Activated B cell treated with CpG ODN at 0.5 μM for 24 hours (primary cell): ENCODE measurements at regions of chr11 and their contacts with region 1.

Region 1: DNA sequence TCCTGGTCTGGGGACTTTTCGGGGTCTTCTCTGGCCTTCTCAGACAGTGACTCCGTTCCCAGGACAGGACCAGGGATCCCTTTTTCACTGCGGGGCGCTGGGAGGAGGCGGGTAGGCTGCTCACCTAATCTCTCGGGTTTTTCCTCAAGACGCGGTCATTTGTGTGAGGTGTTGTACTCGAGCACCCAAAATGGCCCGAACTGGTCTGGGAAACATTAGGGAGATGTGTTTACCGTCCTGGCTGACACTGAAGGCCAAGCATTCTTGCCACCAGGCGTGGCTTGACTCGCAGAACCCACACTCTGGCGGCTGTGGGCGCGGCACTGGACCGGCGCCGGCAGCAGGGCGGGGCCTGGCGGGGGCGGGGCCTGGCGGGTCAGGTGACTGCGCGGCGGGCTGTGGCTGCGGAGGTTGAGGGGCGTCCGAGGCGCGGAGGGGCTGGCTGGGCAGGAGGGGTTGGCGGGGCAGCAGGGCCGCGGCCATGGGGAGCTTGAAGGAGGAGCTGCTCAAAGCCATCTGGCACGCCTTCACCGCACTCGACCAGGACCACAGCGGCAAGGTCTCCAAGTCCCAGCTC is at the start of gene SWAP70:
- DNase-seq: peak; percentile 97
- ATAC-seq: peak; percentile 83
- H3K4me3 Mint-ChIP-seq: peak within 1 kb of the TSS; percentile 96
- H3K27ac Mint-ChIP-seq: peak within 1 kb of the TSS; percentile 97
- H3K4me1 Mint-ChIP-seq: peaks cover 73% of the 10 kb centered on the region
- H3K27me3 Mint-ChIP-seq: no peaks in the 10 kb centered on the region
- CTCF ChIP-seq: no peak
- total RNA-seq, gene SWAP70: 277 and 288 TPM in 2 replicates

Region 2: GRCh38 chr11:9601037-9601875 is 62.5 kb before region 1 on chr11:
- CTCF ChIA-PET with region 1: no interaction called
- POLR2A ChIA-PET with region 1: interaction called, 19 read pairs
- intact Hi-C with region 1: no loop called
- DNase-seq: peak; percentile 53
- ATAC-seq: peak; percentile 76
- H3K4me3 Mint-ChIP-seq: peak overlapping the region; percentile 85
- H3K27ac Mint-ChIP-seq: peak overlapping the region; percentile 96
- H3K4me1 Mint-ChIP-seq: peaks cover 59% of the 10 kb centered on the region
- H3K27me3 Mint-ChIP-seq: no peaks in the 10 kb centered on the region
- CTCF ChIP-seq: no peak

Region 3: GRCh38 chr11:9626496-9627394 is 37.0 kb before region 1 on chr11:
- CTCF ChIA-PET with region 1: no interaction called
- POLR2A ChIA-PET with region 1: interaction called, 35 read pairs
- intact Hi-C with region 1: no loop called
- DNase-seq: no peak
- ATAC-seq: no peak
- H3K4me3 Mint-ChIP-seq: no peak overlapping the region
- H3K27ac Mint-ChIP-seq: peak overlapping the region; percentile 70
- H3K4me1 Mint-ChIP-seq: peaks cover 66% of the 10 kb centered on the region
- H3K27me3 Mint-ChIP-seq: no peaks in the 10 kb centered on the region
- CTCF ChIP-seq: no peak

Region 4: GRCh38 chr11:9688716-9689511 is 25.1 kb after region 1 on chr11:
- CTCF ChIA-PET with region 1: no interaction called
- POLR2A ChIA-PET with region 1: interaction called, 133 read pairs
- intact Hi-C with region 1: loop called (anchors 1 kb)
- DNase-seq: no peak
- ATAC-seq: peak; percentile 80
- H3K4me3 Mint-ChIP-seq: no peak overlapping the region
- H3K27ac Mint-ChIP-seq: no peak overlapping the region
- H3K4me1 Mint-ChIP-seq: peaks cover 52% of the 10 kb centered on the region
- H3K27me3 Mint-ChIP-seq: no peaks in the 10 kb centered on the region
- CTCF ChIP-seq: no peak

Region 5: GRCh38 chr11:9716275-9717039 is 52.7 kb after region 1 on chr11:
- CTCF ChIA-PET with region 1: no interaction called
- POLR2A ChIA-PET with region 1: interaction called, 38 read pairs
- intact Hi-C with region 1: loop called (anchors 2 kb)
- DNase-seq: no peak
- ATAC-seq: peak; percentile 72
- H3K4me3 Mint-ChIP-seq: peak overlapping the region; percentile 71
- H3K27ac Mint-ChIP-seq: peak overlapping the region; percentile 87
- H3K4me1 Mint-ChIP-seq: peaks cover 92% of the 10 kb centered on the region
- H3K27me3 Mint-ChIP-seq: no peaks in the 10 kb centered on the region
- CTCF ChIP-seq: no peak

Region 6: GRCh38 chr11:9739123-9739894 is 75.5 kb after region 1 on chr11:
- CTCF ChIA-PET with region 1: no interaction called
- POLR2A ChIA-PET with region 1: interaction called, 11 read pairs
- intact Hi-C with region 1: no loop called
- DNase-seq: no peak
- ATAC-seq: peak; percentile 83
- H3K4me3 Mint-ChIP-seq: peak overlapping the region; percentile 77
- H3K27ac Mint-ChIP-seq: peak overlapping the region; percentile 97
- H3K4me1 Mint-ChIP-seq: peaks cover 75% of the 10 kb centered on the region
- H3K27me3 Mint-ChIP-seq: no peaks in the 10 kb centered on the region
- CTCF ChIP-seq: no peak

Region 7: DNA sequence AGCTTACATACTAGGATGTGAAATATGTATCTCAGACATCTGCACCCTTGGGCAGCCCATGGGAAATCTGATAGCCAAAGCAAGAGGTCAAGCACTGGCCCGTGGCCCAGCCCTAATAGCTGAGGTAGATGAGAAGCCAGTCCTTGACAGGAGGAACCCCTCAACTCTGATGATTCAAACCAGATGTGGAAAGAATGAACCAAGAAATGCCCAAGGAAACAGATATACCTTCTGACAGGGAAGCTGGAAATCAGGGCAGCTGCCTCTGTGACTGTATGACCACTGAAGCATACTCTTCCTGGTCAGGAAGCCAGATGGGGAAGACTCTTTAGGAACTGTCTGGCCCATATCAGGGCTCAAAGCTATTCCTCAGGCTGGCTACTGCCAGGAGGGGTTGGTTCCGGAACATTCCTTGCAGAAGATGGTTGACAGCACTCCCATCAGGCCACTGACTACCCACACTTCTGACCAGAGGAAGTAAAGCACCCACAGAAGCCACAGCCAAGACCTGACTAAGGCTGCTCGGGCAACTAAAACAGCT is 124.3 kb after region 1 on chr11:
- CTCF ChIA-PET with region 1: no interaction called
- POLR2A ChIA-PET with region 1: no interaction called
- intact Hi-C with region 1: no loop called
- DNase-seq: no peak
- ATAC-seq: no peak
- H3K4me3 Mint-ChIP-seq: no peak overlapping the region
- H3K27ac Mint-ChIP-seq: peak overlapping the region; percentile 71
- H3K4me1 Mint-ChIP-seq: peaks cover 20% of the 10 kb centered on the region
- H3K27me3 Mint-ChIP-seq: no peaks in the 10 kb centered on the region
- CTCF ChIP-seq: no peak

Region 8: DNA sequence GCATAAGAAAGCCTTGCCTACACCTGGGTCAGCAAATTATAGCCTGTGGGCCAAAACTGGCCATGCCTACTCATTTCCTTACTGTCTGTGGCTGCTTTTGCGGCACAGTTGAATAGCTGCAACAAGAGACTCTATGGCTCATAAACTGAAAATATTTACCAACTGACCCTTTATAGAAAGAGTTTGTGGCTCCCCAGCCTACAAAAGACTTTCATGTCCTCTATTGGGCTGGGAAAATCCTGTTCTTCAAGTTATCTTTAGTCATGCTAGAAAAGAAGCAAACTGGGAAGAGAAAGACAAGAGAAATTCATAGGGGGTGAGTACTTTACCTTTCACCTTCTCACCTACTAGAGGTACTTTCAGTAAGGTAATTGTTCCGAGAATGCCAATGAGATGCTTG is 175.2 kb after region 1 on chr11:
- CTCF ChIA-PET with region 1: no interaction called
- POLR2A ChIA-PET with region 1: no interaction called
- intact Hi-C with region 1: no loop called
- DNase-seq: no peak
- ATAC-seq: no peak
- H3K4me3 Mint-ChIP-seq: no peak overlapping the region
- H3K27ac Mint-ChIP-seq: no peak overlapping the region
- H3K4me1 Mint-ChIP-seq: peaks cover 14% of the 10 kb centered on the region
- H3K27me3 Mint-ChIP-seq: no peaks in the 10 kb centered on the region
- CTCF ChIP-seq: no peak